Activated CD8-positive, alpha-beta memory T cell treated with anti-CD3 and anti-CD28 coated beads, Interleukin-2, amount 10 ng/mL, durations not matched to agents 7 days and 5 days (primary cell): ENCODE measurements at regions of chr15 and their contacts with region 1.

Region 1: GRCh38 chr15:81265944-81266775 is 57.8 kb downstream of the STARD5 start:
- DNase-seq: peak; percentile 90
- ATAC-seq: peak; percentile 96
- H3K4me3 Mint-ChIP-seq: peak overlapping the region; percentile 33
- H3K27ac Mint-ChIP-seq: peak overlapping the region; percentile 67
- H3K4me1 Mint-ChIP-seq: peaks cover 34% of the 10 kb centered on the region
- H3K27me3 Mint-ChIP-seq: peaks cover 11% of the 10 kb centered on the region

Region 2: DNA sequence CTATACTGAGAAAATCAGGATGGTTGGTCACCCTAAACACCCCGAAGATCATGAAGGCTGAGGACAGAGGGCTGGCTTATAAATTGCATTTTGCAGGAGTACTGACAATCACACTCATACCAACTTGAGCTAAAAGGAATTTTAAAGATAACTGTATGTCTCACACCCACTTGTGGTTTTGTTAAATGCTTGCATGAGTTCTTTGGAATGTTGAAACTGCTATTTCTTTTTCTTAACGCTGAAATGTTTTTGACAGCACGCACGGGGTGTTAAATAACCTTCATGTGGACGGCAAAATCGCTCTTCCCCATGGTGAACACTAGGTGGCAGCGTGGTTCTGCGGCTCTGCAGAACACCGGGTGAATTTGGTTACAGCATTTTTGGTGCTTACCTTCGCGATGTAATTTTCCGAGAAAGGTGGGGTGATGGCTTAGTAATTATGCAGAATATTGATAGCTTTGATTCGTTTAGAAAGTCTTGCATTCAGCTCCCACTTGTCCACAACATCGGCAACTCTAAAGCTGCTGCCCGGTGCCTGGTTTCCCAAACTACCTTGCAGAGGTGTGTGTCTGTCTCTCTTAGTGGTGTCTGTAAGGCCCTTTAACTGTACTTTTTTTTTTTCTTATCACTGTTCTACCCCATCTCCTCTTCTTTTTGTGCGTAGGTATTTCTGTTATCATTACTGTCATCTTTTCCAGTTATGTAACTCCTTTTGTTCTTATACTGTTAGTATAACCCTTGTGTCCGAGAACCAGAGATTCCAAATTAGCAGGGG is 810.3 kb before region 1 on chr15:
- CTCF ChIA-PET with region 1: interaction called, 11 read pairs
- DNase-seq: peak; percentile 67
- ATAC-seq: peak; percentile 67
- H3K4me3 Mint-ChIP-seq: no peak overlapping the region
- H3K27ac Mint-ChIP-seq: no peak overlapping the region
- H3K4me1 Mint-ChIP-seq: peaks cover 5% of the 10 kb centered on the region
- H3K27me3 Mint-ChIP-seq: peaks cover 35% of the 10 kb centered on the region

Region 3: GRCh38 chr15:81000624-81001151 is 265.5 kb before region 1 on chr15 and contains the start of gene TLNRD1:
- CTCF ChIA-PET with region 1: interaction called, 52 read pairs
- DNase-seq: peak; percentile 91
- ATAC-seq: peak; percentile 74
- H3K4me3 Mint-ChIP-seq: peak within 1 kb of the TSS; percentile 94
- H3K27ac Mint-ChIP-seq: peak within 1 kb of the TSS; percentile 96
- H3K4me1 Mint-ChIP-seq: peaks cover 51% of the 10 kb centered on the region
- H3K27me3 Mint-ChIP-seq: no peaks in the 10 kb centered on the region
- total RNA-seq, gene TLNRD1: 31.2 to 32.3 TPM

Region 4: DNA sequence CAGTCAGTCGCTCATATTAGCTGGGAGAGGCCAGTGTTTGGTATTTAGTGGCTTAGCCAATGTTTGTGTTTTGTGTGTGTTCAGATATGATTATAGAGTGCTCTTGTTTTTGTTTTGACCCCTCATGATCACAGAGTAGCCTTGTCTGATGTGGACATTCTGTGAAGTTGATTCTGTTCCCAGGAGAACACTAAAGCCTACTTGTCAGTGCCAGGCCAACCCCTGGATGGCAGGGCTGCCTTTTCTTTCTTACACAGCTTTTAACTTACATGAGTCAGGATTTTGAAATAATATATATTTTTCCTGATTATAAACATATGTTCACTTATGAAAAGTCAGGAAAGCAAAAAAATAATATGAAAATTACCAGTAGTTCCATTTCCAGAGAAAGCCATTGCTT is 120.2 kb before region 1 on chr15:
- CTCF ChIA-PET with region 1: interaction called, 18 read pairs
- DNase-seq: no peak
- ATAC-seq: no peak
- H3K4me3 Mint-ChIP-seq: no peak overlapping the region
- H3K27ac Mint-ChIP-seq: no peak overlapping the region
- H3K4me1 Mint-ChIP-seq: no peaks in the 10 kb centered on the region
- H3K27me3 Mint-ChIP-seq: peaks cover 7% of the 10 kb centered on the region

Region 5: GRCh38 chr15:81221449-81221848 is 44.7 kb before region 1 on chr15:
- CTCF ChIA-PET with region 1: interaction called, 12 read pairs
- DNase-seq: no peak
- ATAC-seq: no peak
- H3K4me3 Mint-ChIP-seq: no peak overlapping the region
- H3K27ac Mint-ChIP-seq: no peak overlapping the region
- H3K4me1 Mint-ChIP-seq: peaks cover 4% of the 10 kb centered on the region
- H3K27me3 Mint-ChIP-seq: peaks cover 15% of the 10 kb centered on the region

Region 6: DNA sequence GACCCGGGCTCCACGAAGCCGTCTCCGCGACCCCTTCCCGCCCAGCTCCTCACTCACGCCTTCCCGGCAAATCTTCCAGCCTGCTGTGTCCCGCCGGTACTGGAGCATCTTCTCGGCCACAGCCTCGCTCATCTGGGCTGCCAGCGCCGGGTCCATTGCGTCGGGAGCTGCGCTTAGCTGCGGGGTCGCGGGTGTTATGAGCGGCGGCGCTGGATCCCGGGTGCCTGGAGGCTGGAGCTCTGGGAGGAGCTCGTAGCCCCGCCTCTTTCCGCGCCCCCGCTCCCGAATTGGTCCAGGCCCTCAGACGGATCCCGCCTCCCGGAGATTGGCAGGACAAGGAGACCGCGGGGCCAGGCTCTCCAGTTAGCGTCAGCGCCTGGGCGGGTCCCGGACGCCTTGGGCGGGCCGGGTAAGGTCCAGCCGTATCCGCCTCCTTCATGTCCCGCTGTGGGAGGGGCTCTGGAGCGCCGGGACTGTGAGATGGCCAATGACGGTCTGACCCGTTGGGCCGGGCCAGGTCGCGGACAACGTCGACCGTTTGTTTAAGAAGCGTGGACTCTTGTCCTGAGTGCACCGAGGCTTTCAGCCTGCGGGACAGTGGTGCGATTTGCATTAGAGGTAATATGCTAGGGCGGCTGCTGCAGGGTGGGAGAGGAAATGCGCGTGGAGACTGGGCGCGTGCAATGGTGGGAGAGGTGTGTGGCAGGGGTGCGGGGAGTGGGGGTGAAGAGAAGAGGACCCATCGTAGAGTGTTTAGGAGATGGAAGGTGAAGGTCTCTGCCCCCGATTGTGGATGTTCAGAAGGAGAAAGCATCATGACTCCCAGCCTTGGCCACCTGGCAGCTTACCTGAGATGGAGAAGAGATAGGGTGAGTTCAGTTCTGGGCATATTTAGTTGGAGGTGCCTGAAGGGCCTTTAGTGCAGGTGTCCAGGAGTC is 58.1 kb after region 1 on chr15 and contains the start of gene STARD5:
- CTCF ChIA-PET with region 1: interaction called, 20 read pairs
- DNase-seq: peak; percentile 98
- ATAC-seq: peak; percentile 100
- H3K4me3 Mint-ChIP-seq: peak within 1 kb of the TSS; percentile 85
- H3K27ac Mint-ChIP-seq: peak within 1 kb of the TSS; percentile 78
- H3K4me1 Mint-ChIP-seq: peaks cover 29% of the 10 kb centered on the region
- H3K27me3 Mint-ChIP-seq: no peaks in the 10 kb centered on the region
- total RNA-seq, gene STARD5: 4.8 to 5.2 TPM

Region 7: GRCh38 chr15:81400640-81401236 is 134.6 kb after region 1 on chr15:
- CTCF ChIA-PET with region 1: interaction called, 34 read pairs
- DNase-seq: no peak
- ATAC-seq: no peak
- H3K4me3 Mint-ChIP-seq: no peak overlapping the region
- H3K27ac Mint-ChIP-seq: no peak overlapping the region
- H3K4me1 Mint-ChIP-seq: peaks cover 2% of the 10 kb centered on the region
- H3K27me3 Mint-ChIP-seq: peaks cover 2% of the 10 kb centered on the region

Region 8: GRCh38 chr15:81596159-81596865 is 330.2 kb after region 1 on chr15:
- CTCF ChIA-PET with region 1: no interaction called
- DNase-seq: no peak
- ATAC-seq: no peak
- H3K4me3 Mint-ChIP-seq: no peak overlapping the region
- H3K27ac Mint-ChIP-seq: no peak overlapping the region
- H3K4me1 Mint-ChIP-seq: no peaks in the 10 kb centered on the region
- H3K27me3 Mint-ChIP-seq: no peaks in the 10 kb centered on the region